ENCODE measurements at regions of chr17 and their contacts with region 1.

Region 1: GRCh38 chr17:27332485-27333409 is 38.8 kb downstream of the WSB1 start:
- DNase-seq: peak; percentile 89
- ATAC-seq: peak; percentile 98
- H3K4me3 ChIP-seq: peak overlapping the region; percentile 55 to 64
- H3K27ac ChIP-seq: peak overlapping the region; percentile 83
- H3K4me1 ChIP-seq: peaks cover 12% of the 10 kb centered on the region
- H3K27me3 ChIP-seq: no peaks in the 10 kb centered on the region
- CTCF ChIP-seq: peak; percentile 91

Region 2: GRCh38 chr17:27009087-27009486 is 323.7 kb before region 1 on chr17:
- CTCF ChIA-PET with region 1: no interaction called
- POLR2A ChIA-PET with region 1: interaction called, 19 read pairs
- in situ Hi-C with region 1: no loop called
- intact Hi-C with region 1: no loop called
- DNase-seq: no peak
- ATAC-seq: no peak
- H3K4me3 ChIP-seq: peak overlapping the region in 1 of 2 experiments; percentile 27; a peak in 2 of 4 replicates
- H3K27ac ChIP-seq: no peak overlapping the region
- H3K4me1 ChIP-seq: no peaks in the 10 kb centered on the region
- H3K27me3 ChIP-seq: no peaks in the 10 kb centered on the region
- CTCF ChIP-seq: no peak

Region 3: DNA sequence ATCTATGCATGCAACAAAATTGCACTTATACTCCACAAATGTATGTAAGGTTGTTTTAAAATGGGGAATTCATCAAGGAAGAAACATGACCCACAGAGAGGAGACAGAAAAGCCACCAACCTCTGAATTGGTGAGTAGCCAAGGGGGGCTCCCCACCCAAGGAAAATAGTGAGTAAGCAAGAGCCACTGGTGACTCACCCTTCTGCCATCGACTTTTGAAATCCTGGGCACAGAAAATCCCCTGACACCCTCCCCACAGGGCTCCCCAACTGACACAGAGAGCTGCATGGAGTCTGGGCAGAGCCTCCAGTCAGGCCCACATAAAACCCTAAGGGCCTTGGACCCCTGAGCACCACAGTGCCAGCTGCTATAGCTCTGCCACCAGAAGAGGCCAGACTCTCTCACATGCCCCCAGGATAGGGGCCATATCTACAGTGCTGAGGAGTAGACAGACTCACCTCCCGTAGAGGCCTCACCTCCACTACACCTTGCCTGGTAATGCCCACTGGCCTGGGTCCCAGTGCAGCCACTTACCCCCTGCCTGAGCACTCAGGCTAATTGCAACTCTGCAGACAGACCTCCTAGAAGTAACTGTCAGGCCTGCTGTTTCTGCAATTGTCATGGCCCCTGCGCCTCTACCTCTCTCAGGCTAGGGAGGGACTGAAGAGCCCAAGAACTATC is 283.5 kb before region 1 on chr17:
- CTCF ChIA-PET with region 1: no interaction called
- POLR2A ChIA-PET with region 1: no interaction called
- in situ Hi-C with region 1: no loop called
- intact Hi-C with region 1: no loop called
- DNase-seq: no peak
- ATAC-seq: no peak
- H3K4me3 ChIP-seq: no peak overlapping the region
- H3K27ac ChIP-seq: no peak overlapping the region
- H3K4me1 ChIP-seq: no peaks in the 10 kb centered on the region
- H3K27me3 ChIP-seq: no peaks in the 10 kb centered on the region
- CTCF ChIP-seq: no peak

Region 4: DNA sequence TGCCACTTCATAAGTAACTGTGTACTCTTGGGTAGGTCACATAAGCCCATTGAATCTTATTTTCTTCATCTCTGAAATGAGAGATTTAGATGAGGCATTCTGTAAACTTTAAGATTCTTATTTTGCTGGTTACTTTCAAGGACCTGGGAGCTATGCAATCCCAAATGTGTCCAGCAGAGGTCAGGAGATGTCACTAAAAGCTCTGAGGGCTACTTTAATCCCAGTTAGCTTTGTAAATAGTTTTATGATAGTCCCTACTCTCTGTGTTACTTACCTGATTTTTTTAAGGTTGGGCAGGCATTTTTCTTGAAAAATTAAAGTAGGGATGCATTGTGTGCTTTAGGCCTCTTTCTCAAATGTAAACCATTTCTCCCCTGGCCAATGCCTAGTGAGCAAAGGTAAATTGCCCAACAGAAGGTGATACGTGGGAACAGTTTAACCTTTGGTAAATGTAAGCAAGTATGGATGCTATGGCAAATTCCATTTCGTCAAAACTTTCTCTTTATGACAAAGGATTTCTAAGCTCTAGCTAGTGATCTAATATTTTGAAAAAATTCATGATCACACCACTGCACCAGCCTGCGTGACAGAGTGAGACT is 95.9 kb before region 1 on chr17:
- CTCF ChIA-PET with region 1: interaction called, 25 read pairs
- POLR2A ChIA-PET with region 1: interaction called, 3 read pairs
- in situ Hi-C with region 1: loop called (anchors 25 kb)
- intact Hi-C with region 1: loop called (anchors 1 kb)
- DNase-seq: peak; percentile 72
- ATAC-seq: peak; percentile 84
- H3K4me3 ChIP-seq: no peak overlapping the region
- H3K27ac ChIP-seq: no peak overlapping the region
- H3K4me1 ChIP-seq: peaks cover 5% of the 10 kb centered on the region; the same call in 1 of the 2 replicates
- H3K27me3 ChIP-seq: no peaks in the 10 kb centered on the region
- CTCF ChIP-seq: peak; percentile 81; the same call in 1 of the 2 replicates

Region 5: DNA sequence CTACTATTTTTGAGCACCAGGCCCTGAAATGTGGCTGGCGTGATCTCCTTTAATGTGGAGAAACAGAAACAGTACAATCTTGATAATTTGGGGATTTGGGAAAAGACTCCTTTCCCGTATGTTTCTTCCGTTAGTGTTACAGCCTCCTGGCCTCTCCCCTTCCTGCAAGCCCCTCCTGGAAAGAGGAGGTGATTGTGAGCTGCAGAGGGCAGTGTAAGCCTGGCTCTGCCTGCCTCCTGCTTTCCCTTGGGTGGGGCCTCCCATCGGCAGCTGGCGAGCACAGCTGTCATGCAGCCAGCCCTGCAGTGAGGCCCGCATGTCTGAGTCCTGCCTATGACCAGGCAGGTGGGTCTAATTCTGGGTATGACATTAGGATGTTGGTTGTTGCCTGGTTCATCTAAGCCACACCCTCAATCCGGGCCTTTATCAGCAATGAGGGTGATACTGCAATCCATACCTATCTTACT is 87.5 kb before region 1 on chr17:
- CTCF ChIA-PET with region 1: interaction called, 5 read pairs
- POLR2A ChIA-PET with region 1: no interaction called
- in situ Hi-C with region 1: loop called (anchors 25 kb)
- intact Hi-C with region 1: loop called (anchors 2 kb)
- DNase-seq: no peak
- ATAC-seq: peak; percentile 98
- H3K4me3 ChIP-seq: peak overlapping the region in 1 of 2 experiments; percentile 25; a peak in 2 of 4 replicates
- H3K27ac ChIP-seq: peak overlapping the region; percentile 46
- H3K4me1 ChIP-seq: peaks cover 18% of the 10 kb centered on the region
- H3K27me3 ChIP-seq: no peaks in the 10 kb centered on the region
- CTCF ChIP-seq: peak; percentile 82

Region 6: DNA sequence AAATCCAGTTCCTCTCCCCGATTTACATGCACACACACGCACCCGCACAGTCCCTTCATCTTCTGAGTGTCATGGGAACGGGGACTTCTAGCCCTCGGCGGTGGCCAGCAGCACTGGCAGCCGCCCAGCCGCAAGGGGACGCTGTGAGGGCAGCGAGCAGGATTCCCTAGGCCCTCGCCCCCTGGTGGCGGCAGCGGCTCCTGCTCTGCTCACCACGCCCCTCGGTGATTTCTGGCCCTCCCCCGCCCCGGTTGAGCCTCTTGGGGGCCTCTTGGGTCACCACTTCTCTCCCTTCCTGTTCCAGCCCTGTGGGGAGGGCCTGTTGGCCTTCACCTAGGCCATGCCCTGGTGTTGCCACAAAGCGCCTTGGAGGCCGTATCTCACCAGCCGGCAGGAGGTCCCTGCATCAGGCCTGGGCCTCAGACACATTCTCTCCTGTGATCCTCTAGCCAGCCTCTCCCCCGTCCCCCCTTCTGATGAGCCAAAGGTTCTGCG is 48.3 kb after region 1 on chr17:
- CTCF ChIA-PET with region 1: no interaction called
- POLR2A ChIA-PET with region 1: interaction called, 12 read pairs
- in situ Hi-C with region 1: no loop called
- intact Hi-C with region 1: no loop called
- DNase-seq: no peak
- ATAC-seq: peak; percentile 77
- H3K4me3 ChIP-seq: peak overlapping the region; percentile 27 to 45
- H3K27ac ChIP-seq: no peak overlapping the region
- H3K4me1 ChIP-seq: peaks cover 24% of the 10 kb centered on the region
- H3K27me3 ChIP-seq: no peaks in the 10 kb centered on the region
- CTCF ChIP-seq: peak; percentile 100

Measured in Panc1 (cell line).